ENCODE measurements at regions of chr4 and their contacts with region 1.

Region 1: DNA sequence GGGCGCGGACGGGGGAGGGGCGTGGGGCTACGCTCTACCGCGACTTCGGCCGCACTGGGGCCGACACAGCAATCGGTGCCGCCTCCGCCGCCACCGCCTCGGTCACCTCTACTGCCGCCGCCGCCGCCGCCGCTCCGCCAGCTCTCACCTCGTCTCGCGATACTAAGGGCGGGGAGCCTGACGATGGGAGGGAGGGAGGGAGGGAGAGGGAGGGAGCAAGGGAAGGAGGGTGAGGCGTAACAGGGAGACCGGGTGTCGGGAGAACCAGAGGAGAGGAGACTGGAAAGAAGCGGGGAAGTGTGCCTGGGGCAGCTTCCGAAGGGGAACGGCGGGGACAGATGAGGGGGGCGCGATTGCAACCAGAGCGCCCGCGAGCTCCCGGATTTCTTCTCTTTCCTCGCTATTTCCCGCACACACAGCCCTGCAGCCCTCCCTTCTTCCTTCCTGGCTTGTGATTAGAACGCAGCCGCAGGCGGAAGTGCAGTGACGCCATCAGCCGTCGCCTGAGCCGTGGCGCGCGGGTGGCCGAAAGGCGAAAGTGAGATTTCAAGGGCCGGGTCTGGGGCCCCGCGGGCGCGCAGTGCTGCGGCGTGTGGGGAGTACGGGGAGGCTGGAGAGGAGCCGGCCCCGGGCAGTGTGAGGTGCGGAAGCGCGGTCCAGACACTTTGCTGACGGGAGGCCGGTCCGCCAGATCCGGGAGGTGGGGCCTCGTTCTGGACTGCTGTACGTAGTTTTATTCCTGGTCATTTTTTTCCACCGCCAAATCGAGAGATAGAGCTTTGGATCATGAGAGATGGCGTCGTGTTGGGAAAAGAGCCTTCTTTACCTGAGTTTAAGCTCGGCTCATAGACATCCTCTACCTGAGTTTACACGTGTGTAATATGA is at the start of gene ANKRD17:
- DNase-seq: peak; percentile 96 to 98
- ATAC-seq: peak; percentile 96
- H3K4me3 ChIP-seq: peak within 1 kb of the TSS; percentile 75 to 79
- H3K27ac ChIP-seq: peak within 1 kb of the TSS; percentile 88 to 100
- H3K4me1 ChIP-seq: no peaks in the 10 kb centered on the region
- H3K27me3 ChIP-seq: no peaks in the 10 kb centered on the region
- total RNA-seq, gene ANKRD17: 59.4 to 67.1 TPM

Region 2: GRCh38 chr4:73069338-73070073 is 189.4 kb before region 1 on chr4 and contains the start of gene COX18:
- intact Hi-C with region 1: loop called (anchors 1 to 2 kb)
- DNase-seq: peak; percentile 99
- ATAC-seq: peak; percentile 99
- H3K4me3 ChIP-seq: peak within 1 kb of the TSS; percentile 68 to 90
- H3K27ac ChIP-seq: peak within 1 kb of the TSS; percentile 72 to 79
- H3K4me1 ChIP-seq: peaks cover 0 to 2% of the 10 kb centered on the region in 2 donors
- H3K27me3 ChIP-seq: no peaks in the 10 kb centered on the region
- total RNA-seq, gene COX18: 8.6 to 12.5 TPM

Region 3: GRCh38 chr4:73142995-73143547 is 115.9 kb before region 1 on chr4:
- intact Hi-C with region 1: loop called (anchors 5 kb)
- DNase-seq: no peak
- ATAC-seq: no peak
- H3K4me3 ChIP-seq: no peak overlapping the region
- H3K27ac ChIP-seq: no peak overlapping the region
- H3K4me1 ChIP-seq: peaks cover 0 to 2% of the 10 kb centered on the region in 2 donors
- H3K27me3 ChIP-seq: no peaks in the 10 kb centered on the region

Region 4: DNA sequence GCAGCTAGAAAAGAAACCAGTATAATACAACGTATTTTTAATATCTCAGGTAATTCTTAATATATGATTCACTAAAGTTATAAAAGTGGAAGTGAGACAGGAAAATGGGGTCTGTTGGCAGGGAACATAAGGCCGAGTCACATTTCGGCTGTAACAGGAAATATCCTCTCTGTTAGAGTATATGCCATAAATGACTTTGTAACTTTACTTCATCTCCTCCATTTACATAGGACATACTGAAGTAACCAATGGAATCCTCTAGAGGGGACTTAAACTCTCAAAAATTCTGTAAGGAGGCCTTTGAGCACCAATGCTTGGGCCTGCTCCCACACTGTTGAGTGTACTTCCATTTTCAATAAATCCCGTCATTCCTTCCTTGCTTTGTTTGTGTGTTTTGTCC is 71.6 kb before region 1 on chr4:
- intact Hi-C with region 1: loop called in 1 of 2 experiments (anchors 10 kb)
- DNase-seq: no peak
- ATAC-seq: no peak
- H3K4me3 ChIP-seq: no peak overlapping the region
- H3K27ac ChIP-seq: no peak overlapping the region
- H3K4me1 ChIP-seq: no peaks in the 10 kb centered on the region
- H3K27me3 ChIP-seq: no peaks in the 10 kb centered on the region

Region 5: GRCh38 chr4:73589261-73589847 is 330.4 kb after region 1 on chr4:
- intact Hi-C with region 1: no loop called
- DNase-seq: no peak
- ATAC-seq: no peak
- H3K4me3 ChIP-seq: no peak overlapping the region
- H3K27ac ChIP-seq: no peak overlapping the region
- H3K4me1 ChIP-seq: no peaks in the 10 kb centered on the region
- H3K27me3 ChIP-seq: no peaks in the 10 kb centered on the region